Pancreas (tissue), 10 donors: ENCODE measurements at regions of chr10 and their contacts with region 1.

Region 1: DNA sequence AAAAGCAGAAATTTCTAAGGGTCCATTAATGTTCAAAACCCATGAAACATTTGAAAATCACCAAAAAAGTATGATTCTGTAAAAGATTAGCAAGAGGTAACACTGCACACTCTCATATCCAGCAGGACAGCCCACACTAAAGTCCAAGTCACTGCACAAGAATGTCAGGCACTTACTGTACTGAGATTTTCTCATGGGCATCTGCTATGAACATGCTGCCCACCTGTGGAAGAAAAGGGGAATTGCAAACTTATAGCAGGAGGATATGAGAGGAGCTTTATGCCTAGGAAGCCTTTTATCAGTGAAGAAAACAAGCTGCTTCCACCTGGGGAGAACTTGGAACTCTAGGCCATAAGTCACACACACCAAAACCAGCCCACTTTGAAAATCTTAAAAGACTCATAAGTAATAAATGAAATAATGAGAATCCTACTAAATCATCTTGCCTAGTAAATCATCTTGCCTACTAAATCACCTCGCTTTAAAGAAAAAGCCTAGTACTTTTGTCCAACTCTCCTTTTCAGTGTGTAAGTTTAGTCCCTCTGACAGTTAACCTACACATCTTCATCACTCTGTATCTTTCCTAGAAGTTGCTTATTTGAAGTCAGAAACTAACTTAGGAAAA is 46.1 kb downstream of the ARMH3 start:
- DNase-seq: peak in 3 of 6 donors; percentile 30 to 66 (median 35)
- ATAC-seq: peak; percentile 96 to 100 (median 100)
- H3K4me3 ChIP-seq: no peak overlapping the region
- H3K27ac ChIP-seq: no peak overlapping the region
- H3K4me1 ChIP-seq: peaks cover 0 to 3% (median 0%) of the 10 kb centered on the region in 3 donors
- H3K27me3 ChIP-seq: no peaks in the 10 kb centered on the region
- CTCF ChIP-seq: peak; percentile 50 to 82 (median 76)

Region 2: GRCh38 chr10:101830322-101831168 is 179.4 kb before region 1 on chr10:
- intact Hi-C with region 1: loop called in 1 of 3 experiments (anchors 10 kb)
- DNase-seq: peak; percentile 88 to 96 (median 91)
- ATAC-seq: peak; percentile 85 to 91 (median 90)
- H3K4me3 ChIP-seq: peak overlapping the region; percentile 22 to 56 (median 50)
- H3K27ac ChIP-seq: peak overlapping the region; percentile 27 to 60 (median 48)
- H3K4me1 ChIP-seq: peaks cover 0 to 8% (median 0%) of the 10 kb centered on the region in 3 donors
- H3K27me3 ChIP-seq: no peaks in the 10 kb centered on the region
- CTCF ChIP-seq: no peak

Region 3: DNA sequence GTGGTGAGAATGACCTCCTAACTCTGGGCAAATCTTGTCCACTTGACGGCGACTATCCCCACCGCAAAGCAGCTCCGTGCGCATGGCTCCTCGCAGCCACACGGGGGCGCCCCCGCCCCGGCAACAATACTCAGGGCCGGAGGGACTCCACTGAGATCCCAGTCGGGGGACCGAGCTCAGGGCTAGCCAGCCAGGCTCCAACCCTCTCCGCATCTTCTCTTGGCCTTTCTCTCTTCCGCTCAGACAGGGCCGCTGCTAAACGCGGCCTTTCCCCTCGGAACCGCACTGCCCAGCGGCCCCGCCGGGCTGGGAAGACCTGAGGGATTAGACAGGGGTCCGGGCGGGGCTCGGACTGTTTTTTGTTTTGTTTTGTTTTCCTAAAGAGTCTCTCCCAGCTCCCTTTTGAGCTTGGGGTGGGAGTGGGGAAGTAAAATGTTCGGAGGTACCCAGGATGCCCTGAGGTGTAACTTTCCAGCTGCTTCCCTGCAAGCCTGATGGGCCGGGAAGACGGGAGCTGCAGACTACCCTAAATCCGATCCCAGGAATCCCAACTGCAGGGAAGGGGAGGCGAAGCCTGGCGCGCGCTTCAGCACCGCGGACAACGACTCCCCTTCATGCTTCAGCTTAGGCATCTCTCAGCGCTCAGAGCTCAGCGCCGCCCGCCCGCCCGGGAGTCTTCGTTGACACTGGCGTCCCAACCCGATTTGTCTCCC is 169.0 kb before region 1 on chr10:
- intact Hi-C with region 1: loop called in 2 of 3 experiments (anchors 10 kb)
- DNase-seq: peak; percentile 57 to 90 (median 76)
- ATAC-seq: peak; percentile 84 to 94 (median 90)
- H3K4me3 ChIP-seq: peak overlapping the region in 3 of 4 donors; percentile 10 to 47 (median 11)
- H3K27ac ChIP-seq: no peak overlapping the region
- H3K4me1 ChIP-seq: peaks cover 0 to 3% (median 0%) of the 10 kb centered on the region in 3 donors
- H3K27me3 ChIP-seq: no peaks in the 10 kb centered on the region
- CTCF ChIP-seq: peak; percentile 84 to 91 (median 88)